ENCODE measurements at regions of chr3 and their contacts with region 1.

Region 1: GRCh38 chr3:111978493-111979433 is at the start of gene ABHD10:
- DNase-seq: peak; percentile 93
- H3K4me3 Mint-ChIP-seq: peak within 1 kb of the TSS; percentile 89
- H3K27ac Mint-ChIP-seq: peak within 1 kb of the TSS; percentile 90
- H3K4me1 Mint-ChIP-seq: peaks cover 49% of the 10 kb centered on the region
- H3K27me3 Mint-ChIP-seq: peaks cover 14% of the 10 kb centered on the region
- total RNA-seq, gene ABHD10: 37.7 and 42.9 TPM in 2 replicates

Region 2: GRCh38 chr3:111071257-111072015 is 907.3 kb before region 1 on chr3 and contains the start of gene NECTIN3:
- intact Hi-C with region 1: loop called (anchors 5 kb)
- DNase-seq: peak; percentile 77
- H3K4me3 Mint-ChIP-seq: peak within 1 kb of the TSS; percentile 91
- H3K27ac Mint-ChIP-seq: peak within 1 kb of the TSS; percentile 90
- H3K4me1 Mint-ChIP-seq: peaks cover 28% of the 10 kb centered on the region
- H3K27me3 Mint-ChIP-seq: peaks cover 55% of the 10 kb centered on the region
- total RNA-seq, gene NECTIN3: 3.5 and 4.6 TPM in 2 replicates

Region 3: DNA sequence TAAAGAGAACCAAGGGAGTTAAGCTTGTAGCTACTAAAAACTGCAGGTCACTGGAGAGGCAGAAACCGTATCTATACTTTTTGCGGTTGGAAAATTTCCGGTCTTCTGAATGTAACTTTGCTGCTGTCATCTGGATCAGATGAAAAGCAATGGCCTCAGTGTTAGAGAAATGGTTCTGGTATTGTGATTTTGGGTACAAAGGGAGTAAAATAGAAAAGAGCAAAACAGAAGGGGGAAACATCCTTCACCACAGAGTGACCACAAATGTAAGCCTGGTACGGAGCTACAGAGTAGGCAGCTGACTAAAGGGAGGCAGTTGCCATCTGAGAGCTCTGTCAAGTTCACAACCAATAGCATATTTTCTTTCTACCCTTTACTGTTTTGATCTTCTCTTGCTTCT is 431.1 kb before region 1 on chr3:
- intact Hi-C with region 1: loop called (anchors 2 kb)
- DNase-seq: peak; percentile 48
- H3K4me3 Mint-ChIP-seq: no peak overlapping the region
- H3K27ac Mint-ChIP-seq: no peak overlapping the region
- H3K4me1 Mint-ChIP-seq: peaks cover 25% of the 10 kb centered on the region
- H3K27me3 Mint-ChIP-seq: no peaks in the 10 kb centered on the region

Region 4: DNA sequence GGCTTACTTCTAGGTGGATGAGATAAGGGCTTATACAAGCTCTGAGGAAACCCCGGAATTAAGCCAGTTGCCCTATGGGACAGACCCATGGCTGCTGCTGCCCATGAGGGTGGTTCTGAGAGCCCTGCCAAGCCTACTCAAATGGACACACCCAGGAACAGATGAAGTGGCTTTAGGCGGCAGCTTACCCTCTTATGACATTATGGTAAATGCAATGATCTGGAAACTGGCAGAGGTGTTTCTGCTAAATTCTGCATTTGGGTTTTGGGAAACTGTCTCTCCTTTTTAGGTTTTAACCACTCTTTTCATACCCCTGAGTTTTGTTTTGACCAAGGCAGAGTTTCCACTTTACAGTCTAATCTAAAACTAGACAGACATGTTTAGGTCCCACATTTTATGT is 374.6 kb before region 1 on chr3:
- intact Hi-C with region 1: loop called (anchors 2 kb)
- DNase-seq: no peak
- H3K4me3 Mint-ChIP-seq: peak overlapping the region; percentile 53
- H3K27ac Mint-ChIP-seq: peak overlapping the region; percentile 99
- H3K4me1 Mint-ChIP-seq: peaks cover 84% of the 10 kb centered on the region
- H3K27me3 Mint-ChIP-seq: no peaks in the 10 kb centered on the region

Region 5: DNA sequence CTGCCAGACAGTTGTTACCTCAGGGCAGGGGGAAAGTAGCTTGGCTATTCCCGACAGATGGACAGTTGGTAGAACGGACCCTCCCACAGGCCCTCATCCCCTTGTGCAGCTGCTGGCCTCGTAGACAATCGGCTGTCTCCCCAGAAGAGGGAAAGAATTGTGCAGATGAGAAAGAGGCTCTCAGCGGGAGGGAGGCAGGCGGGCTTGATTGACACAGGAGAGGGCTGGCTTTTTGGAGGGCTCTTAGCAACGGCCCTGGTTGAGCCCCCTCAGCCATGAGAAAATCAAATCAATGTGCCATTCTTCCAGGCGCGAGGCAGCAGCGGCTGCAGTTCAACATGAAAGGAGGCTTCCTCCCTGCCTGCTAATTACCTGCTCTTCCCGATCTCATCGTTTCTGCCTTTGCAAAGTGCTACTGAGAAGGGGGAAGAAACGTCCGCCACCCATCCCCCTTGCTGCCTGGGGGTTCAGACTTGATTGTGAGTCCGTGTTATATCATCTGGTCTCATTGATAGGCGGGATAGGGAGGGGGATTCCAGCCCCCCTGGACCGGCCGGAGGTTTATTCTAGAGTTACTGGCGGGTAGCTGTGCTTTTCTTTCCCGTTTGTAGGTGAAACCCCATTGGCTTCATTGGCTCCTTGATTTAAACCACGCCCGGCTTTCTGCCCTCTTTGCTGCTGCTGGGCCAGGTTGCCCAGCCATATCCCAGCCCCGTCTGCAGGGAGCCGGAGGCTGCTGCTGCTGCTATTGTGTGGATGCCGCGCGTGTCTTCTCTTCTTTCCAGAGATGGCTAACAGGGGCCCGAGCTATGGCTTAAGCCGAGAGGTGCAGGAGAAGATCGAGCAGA is 20.1 kb after region 1 on chr3 and contains the start of gene TAGLN3:
- intact Hi-C with region 1: loop called (anchors 1 kb)
- DNase-seq: no peak
- H3K4me3 Mint-ChIP-seq: peak within 1 kb of the TSS; percentile 66
- H3K27ac Mint-ChIP-seq: no peak within 1 kb of the TSS
- H3K4me1 Mint-ChIP-seq: peaks cover 51% of the 10 kb centered on the region
- H3K27me3 Mint-ChIP-seq: no peaks in the 10 kb centered on the region
- total RNA-seq, gene TAGLN3: 0.78 and 1.1 TPM in 2 replicates

Measured in activated T-helper 1 cell treated with anti-CD3 and anti-CD28 coated beads, Interleukin-12 subunit alpha, Interleukin-12 subunit beta, Interleukin-2, Interleukin-4 antibody, amounts not matched to agents 30 ng/mL and 10 ng/mL and 1 ng/mL, durations not matched to agents 14 hours and 24 hours and 36 hours (primary cell).